ENCODE measurements at regions of chr3 and their contacts with region 1.

Region 1: DNA sequence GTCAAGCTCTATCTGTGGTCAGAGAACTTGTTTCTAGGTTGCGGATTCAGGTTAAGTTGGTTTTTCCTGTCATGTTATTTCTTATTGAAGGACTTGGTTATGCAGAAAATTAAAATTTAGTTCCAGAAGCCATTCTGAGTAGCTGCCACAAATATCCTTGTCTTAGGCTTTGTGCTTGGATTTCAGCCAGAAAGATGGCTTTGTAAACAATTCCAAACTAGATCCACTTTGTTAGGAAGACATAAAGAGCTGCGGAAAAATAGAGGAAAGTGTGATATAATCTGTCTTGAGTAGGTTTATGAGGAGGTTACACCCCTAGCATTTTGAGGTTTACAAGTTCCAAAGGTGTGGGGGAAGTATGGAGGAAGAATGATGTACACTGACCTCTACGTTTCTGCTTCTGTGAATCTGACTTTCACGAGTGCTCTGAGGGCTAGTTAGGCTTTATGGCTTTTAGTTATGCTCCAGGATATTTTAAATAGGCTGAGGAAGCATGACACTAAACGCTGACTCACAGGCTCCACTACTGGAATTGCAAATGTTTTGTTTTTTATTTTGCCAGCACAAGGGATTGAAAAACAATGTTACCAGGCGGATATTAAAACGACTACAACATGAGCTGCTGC is 46.3 kb upstream of the UTS2B start:
- DNase-seq: no peak
- ATAC-seq: no peak
- H3K4me3 ChIP-seq: no peak overlapping the region
- H3K27ac ChIP-seq: no peak overlapping the region
- H3K4me1 ChIP-seq: peaks cover 14% of the 10 kb centered on the region
- H3K27me3 ChIP-seq: no peaks in the 10 kb centered on the region
- CTCF ChIP-seq: no peak
- EP300 ChIP-seq: no peak
- POLR2A ChIP-seq: no peak
- RAD21 ChIP-seq: no peak

Region 2: GRCh38 chr3:190131329-190131728 is 1245.3 kb before region 1 on chr3:
- CTCF ChIA-PET with region 1: no interaction called
- POLR2A ChIA-PET with region 1: no interaction called
- RAD21 ChIA-PET with region 1: no interaction called
- SMC1A ChIA-PET with region 1: no interaction called
- in situ Hi-C with region 1: no loop called
- intact Hi-C with region 1: no loop called
- DNase-seq: no peak
- ATAC-seq: peak; percentile 74
- H3K4me3 ChIP-seq: no peak overlapping the region
- H3K27ac ChIP-seq: no peak overlapping the region
- H3K4me1 ChIP-seq: no peaks in the 10 kb centered on the region
- H3K27me3 ChIP-seq: no peaks in the 10 kb centered on the region
- CTCF ChIP-seq: no peak
- EP300 ChIP-seq: no peak
- POLR2A ChIP-seq: no peak
- RAD21 ChIP-seq: no peak

Region 3: GRCh38 chr3:191235331-191236314 is 141.0 kb before region 1 on chr3:
- CTCF ChIA-PET with region 1: no interaction called
- POLR2A ChIA-PET with region 1: no interaction called
- RAD21 ChIA-PET with region 1: interaction called, 3 read pairs
- SMC1A ChIA-PET with region 1: interaction called, 8 read pairs
- in situ Hi-C with region 1: no loop called
- intact Hi-C with region 1: loop called (anchors 5 kb)
- DNase-seq: peak; percentile 90
- ATAC-seq: peak; percentile 98
- H3K4me3 ChIP-seq: no peak overlapping the region
- H3K27ac ChIP-seq: peak overlapping the region; percentile 17; the same call in 1 of the 2 replicates
- H3K4me1 ChIP-seq: peaks cover 19% of the 10 kb centered on the region; the same call in 1 of the 2 replicates
- H3K27me3 ChIP-seq: no peaks in the 10 kb centered on the region
- CTCF ChIP-seq: no peak
- EP300 ChIP-seq: peak; percentile 64 to 68; a peak in 2 of 4 replicates
- POLR2A ChIP-seq: no peak
- RAD21 ChIP-seq: peak; percentile 30; the same call in 1 of the 2 replicates

Region 4: GRCh38 chr3:191388823-191389222 is 12.2 kb after region 1 on chr3:
- CTCF ChIA-PET with region 1: interaction called, 8 read pairs
- POLR2A ChIA-PET with region 1: no interaction called
- RAD21 ChIA-PET with region 1: interaction called, 7 read pairs
- SMC1A ChIA-PET with region 1: interaction called, 14 read pairs
- in situ Hi-C with region 1: no loop called
- intact Hi-C with region 1: no loop called
- DNase-seq: no peak
- ATAC-seq: no peak
- H3K4me3 ChIP-seq: no peak overlapping the region
- H3K27ac ChIP-seq: no peak overlapping the region
- H3K4me1 ChIP-seq: no peaks in the 10 kb centered on the region
- H3K27me3 ChIP-seq: no peaks in the 10 kb centered on the region
- CTCF ChIP-seq: peak in 2 of 3 experiments; percentile 21 to 38; a peak in 2 of 6 replicates
- EP300 ChIP-seq: no peak
- POLR2A ChIP-seq: no peak
- RAD21 ChIP-seq: peak; percentile 28; the same call in 1 of the 2 replicates

Region 5: GRCh38 chr3:191425322-191425734 is 48.7 kb after region 1 on chr3:
- CTCF ChIA-PET with region 1: no interaction called
- POLR2A ChIA-PET with region 1: no interaction called
- RAD21 ChIA-PET with region 1: no interaction called
- SMC1A ChIA-PET with region 1: no interaction called
- in situ Hi-C with region 1: no loop called
- intact Hi-C with region 1: no loop called
- DNase-seq: no peak
- ATAC-seq: no peak
- H3K4me3 ChIP-seq: no peak overlapping the region
- H3K27ac ChIP-seq: no peak overlapping the region
- H3K4me1 ChIP-seq: no peaks in the 10 kb centered on the region
- H3K27me3 ChIP-seq: peaks cover 0 to 1% of the 10 kb centered on the region in 2 experiments; a peak in 1 of 4 replicates
- CTCF ChIP-seq: no peak
- EP300 ChIP-seq: no peak
- POLR2A ChIP-seq: no peak
- RAD21 ChIP-seq: no peak

Region 6: GRCh38 chr3:191523148-191523547 is 146.5 kb after region 1 on chr3:
- CTCF ChIA-PET with region 1: no interaction called
- POLR2A ChIA-PET with region 1: no interaction called
- RAD21 ChIA-PET with region 1: no interaction called
- SMC1A ChIA-PET with region 1: no interaction called
- in situ Hi-C with region 1: no loop called
- intact Hi-C with region 1: no loop called
- DNase-seq: no peak
- ATAC-seq: no peak
- H3K4me3 ChIP-seq: no peak overlapping the region
- H3K27ac ChIP-seq: no peak overlapping the region
- H3K4me1 ChIP-seq: no peaks in the 10 kb centered on the region
- H3K27me3 ChIP-seq: no peaks in the 10 kb centered on the region
- CTCF ChIP-seq: no peak
- EP300 ChIP-seq: no peak
- POLR2A ChIP-seq: no peak
- RAD21 ChIP-seq: no peak